OCI-LY7 (cell line): ENCODE measurements at regions of chr2 and their contacts with region 1.

Region 1: DNA sequence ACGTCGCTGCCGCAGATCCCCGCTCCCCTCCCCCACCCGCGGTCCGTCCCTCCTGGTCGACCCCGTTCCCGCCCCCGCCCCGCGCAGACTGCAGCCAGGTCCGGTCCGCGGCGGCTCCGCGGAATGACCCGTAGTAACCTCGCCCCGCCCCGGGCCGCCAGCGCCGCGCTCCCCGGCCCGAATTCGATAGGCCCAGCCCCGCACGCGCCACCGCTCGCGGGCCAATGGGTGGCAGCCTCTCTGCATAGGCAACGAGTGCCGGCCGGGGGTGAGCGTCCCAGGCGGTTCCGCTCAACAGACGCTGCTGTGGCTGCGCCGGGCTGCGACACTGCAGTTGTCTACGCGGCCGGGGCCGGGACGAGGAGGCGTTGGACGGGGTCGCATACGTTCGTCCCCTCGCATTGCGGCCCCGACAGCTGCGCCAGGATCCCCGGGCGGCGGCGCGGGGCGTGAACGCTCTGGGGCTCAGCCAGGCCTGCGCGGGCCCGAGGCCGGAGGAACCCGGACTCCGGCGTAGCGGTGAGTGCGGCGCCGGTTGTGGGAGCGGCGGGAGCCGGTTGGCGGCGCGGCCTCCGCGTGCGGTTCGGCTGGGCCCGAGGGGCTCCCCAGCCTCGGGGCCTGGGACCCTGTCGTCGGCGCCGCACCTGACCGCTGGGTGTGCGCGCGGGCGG is at the start of gene ACSL3:
- DNase-seq: peak; percentile 97
- H3K4me3 ChIP-seq: peak within 1 kb of the TSS; percentile 92
- H3K27ac ChIP-seq: peak within 1 kb of the TSS; percentile 77
- H3K4me1 ChIP-seq: peaks cover 34% of the 10 kb centered on the region
- CTCF ChIP-seq: 0 out of 2 replicates have a peak, but pooled peaks have one; percentile 32
- total RNA-seq, gene ACSL3: 62.6 and 65.6 TPM in 2 replicates

Region 2: DNA sequence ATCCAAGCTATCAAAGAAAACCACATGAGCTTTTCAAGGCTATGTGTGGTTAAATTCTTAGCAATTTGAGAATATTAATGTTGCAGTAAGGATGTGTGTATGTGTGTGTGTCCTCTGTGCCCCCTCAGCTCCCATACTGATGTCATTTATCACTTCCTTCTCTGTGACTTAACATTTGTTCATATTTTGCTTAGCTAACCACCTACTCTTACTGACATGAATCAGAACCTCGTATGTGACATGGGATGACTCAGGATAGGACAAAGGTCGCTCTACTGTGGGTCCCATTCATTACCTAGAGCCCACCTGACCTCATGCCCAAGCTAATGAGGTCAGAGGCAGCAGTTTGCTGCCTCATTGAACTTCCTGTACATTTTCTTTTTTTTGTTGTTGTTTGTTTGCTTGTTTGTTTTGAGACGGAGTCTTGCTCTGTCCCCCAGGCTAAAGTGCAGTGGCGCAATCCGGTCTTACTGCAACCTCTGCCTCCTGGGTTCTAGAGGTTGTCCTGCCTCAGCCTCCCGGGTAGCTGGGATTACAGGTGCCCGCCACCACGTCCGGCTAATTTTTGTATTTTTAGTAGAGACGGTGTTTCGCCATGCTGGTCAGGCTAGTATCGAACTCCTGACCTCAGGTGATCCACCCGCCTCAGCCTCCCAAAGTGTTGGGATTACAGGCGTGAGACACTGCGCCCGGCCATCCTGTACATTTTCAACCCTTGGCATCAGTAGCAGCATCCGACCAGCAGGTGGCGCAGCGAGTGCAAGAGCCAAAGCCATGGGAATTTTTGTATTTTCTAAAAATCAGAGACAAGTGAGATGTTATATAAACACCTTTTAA is 153.0 kb before region 1 on chr2:
- CTCF ChIA-PET with region 1: interaction called, 3 read pairs
- POLR2A ChIA-PET with region 1: interaction called, 7 read pairs
- intact Hi-C with region 1: loop called (anchors 1 kb)
- DNase-seq: peak; percentile 76
- H3K4me3 ChIP-seq: no peak overlapping the region
- H3K27ac ChIP-seq: no peak overlapping the region
- H3K4me1 ChIP-seq: peaks cover 17% of the 10 kb centered on the region
- CTCF ChIP-seq: peak; percentile 96

Region 3: DNA sequence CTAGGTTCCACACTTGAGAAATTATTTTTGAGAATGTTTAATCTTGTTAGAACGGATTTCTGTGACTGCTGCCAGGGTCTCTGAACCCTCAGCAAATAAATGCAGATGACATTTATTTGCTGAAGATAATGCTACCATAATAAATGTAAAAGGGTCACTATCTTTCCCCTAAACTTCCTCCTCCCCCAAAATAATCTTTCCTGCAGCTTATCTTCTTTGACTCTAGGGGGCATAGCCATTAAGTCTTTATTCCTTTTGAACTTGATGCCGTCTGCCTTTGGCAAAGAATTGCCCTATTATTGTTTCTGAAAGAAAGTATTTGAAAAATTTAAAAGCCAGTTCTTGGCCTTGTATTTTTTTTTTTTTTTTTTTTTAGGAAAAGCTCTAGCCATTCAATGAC is 63.6 kb before region 1 on chr2:
- CTCF ChIA-PET with region 1: interaction called, 3 read pairs
- POLR2A ChIA-PET with region 1: interaction called, 10 read pairs
- intact Hi-C with region 1: loop called (anchors 2 kb)
- DNase-seq: peak; percentile 39
- H3K4me3 ChIP-seq: no peak overlapping the region
- H3K27ac ChIP-seq: no peak overlapping the region
- H3K4me1 ChIP-seq: peaks cover 51% of the 10 kb centered on the region
- CTCF ChIP-seq: peak; percentile 80

Region 4: GRCh38 chr2:222848862-222849261 is 12.0 kb before region 1 on chr2:
- CTCF ChIA-PET with region 1: no interaction called
- POLR2A ChIA-PET with region 1: interaction called, 11 read pairs
- intact Hi-C with region 1: no loop called
- DNase-seq: no peak
- H3K4me3 ChIP-seq: no peak overlapping the region
- H3K27ac ChIP-seq: no peak overlapping the region
- H3K4me1 ChIP-seq: no peaks in the 10 kb centered on the region
- CTCF ChIP-seq: no peak

Region 5: DNA sequence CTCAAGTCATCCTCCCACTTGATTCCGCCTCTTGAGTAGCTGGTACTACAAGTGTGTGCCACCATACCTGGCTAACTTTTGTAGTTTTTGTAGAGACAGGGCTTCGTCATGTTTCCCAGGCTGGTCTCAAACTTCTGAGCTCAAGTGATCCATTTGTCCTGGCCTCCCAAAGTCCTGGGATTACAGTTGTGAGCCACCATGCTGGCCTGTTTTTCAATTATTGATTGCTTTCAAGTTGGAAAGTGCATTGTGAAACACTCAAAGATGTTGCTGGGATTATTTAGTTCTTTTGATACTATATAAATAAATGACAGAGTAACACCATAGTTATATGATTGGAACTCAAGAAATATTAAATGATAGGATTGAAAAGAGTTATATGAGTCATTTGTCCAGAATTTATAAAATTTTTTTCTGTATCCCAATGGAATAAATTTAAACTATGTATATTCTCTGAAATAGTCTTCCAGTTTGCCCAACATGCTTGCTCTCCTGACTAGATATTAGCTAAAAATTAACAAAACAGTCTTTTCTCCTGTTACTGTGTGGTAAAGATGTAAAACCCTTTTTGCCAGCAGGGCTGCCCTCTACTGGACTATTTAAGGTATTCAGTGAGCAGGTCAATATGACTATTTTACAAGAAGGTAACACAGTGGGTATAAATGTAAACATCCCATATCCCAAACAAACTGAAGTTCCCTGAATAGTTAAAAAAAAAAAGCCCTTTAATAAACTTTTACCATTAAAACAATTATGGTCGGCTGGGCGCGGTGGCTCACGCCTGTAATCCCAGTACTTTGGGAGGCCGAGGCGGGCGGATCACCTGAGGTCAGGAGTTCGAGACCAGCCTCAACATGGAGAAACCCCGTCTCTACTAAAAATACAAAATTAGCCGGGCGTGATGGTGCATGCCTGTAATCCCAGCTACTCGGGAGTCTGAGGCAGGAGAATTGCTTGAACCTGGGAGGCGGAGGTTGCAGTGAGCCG is 42.7 kb after region 1 on chr2:
- CTCF ChIA-PET with region 1: no interaction called
- POLR2A ChIA-PET with region 1: interaction called, 6 read pairs
- intact Hi-C with region 1: loop called (anchors 2 kb)
- DNase-seq: peak; percentile 67
- H3K4me3 ChIP-seq: no peak overlapping the region
- H3K27ac ChIP-seq: no peak overlapping the region
- H3K4me1 ChIP-seq: peaks cover 6% of the 10 kb centered on the region
- CTCF ChIP-seq: peak; percentile 90

Region 6: DNA sequence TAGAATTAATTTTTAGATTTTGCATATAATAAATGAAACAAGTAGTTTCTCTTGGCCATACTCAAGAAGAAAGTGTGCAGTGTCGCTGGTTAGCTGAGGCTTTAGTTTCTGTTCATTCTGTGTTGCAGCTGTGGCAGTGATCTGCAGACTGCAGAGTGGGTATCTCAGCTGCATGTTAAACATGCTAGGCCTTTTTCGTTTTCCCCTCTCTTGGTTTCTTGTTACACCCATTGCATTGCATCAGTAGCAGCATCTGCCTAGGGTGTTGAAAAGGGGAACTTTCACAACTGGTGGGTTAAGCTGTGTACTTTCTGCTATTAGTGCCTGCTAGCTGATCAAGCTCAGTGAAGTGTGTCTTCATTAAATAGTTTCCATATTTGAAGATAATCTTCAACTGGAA is 51.2 kb after region 1 on chr2:
- CTCF ChIA-PET with region 1: interaction called, 3 read pairs
- POLR2A ChIA-PET with region 1: interaction called, 16 read pairs
- intact Hi-C with region 1: loop called (anchors 2 kb)
- DNase-seq: peak; percentile 97
- H3K4me3 ChIP-seq: peak overlapping the region; percentile 59
- H3K27ac ChIP-seq: peak overlapping the region; percentile 98
- H3K4me1 ChIP-seq: peaks cover 69% of the 10 kb centered on the region
- CTCF ChIP-seq: no peak

Region 7: GRCh38 chr2:222939208-222939856 is 78.5 kb after region 1 on chr2:
- CTCF ChIA-PET with region 1: no interaction called
- POLR2A ChIA-PET with region 1: interaction called, 4 read pairs
- intact Hi-C with region 1: loop called (anchors 1 kb)
- DNase-seq: peak; percentile 73
- H3K4me3 ChIP-seq: no peak overlapping the region
- H3K27ac ChIP-seq: no peak overlapping the region
- H3K4me1 ChIP-seq: no peaks in the 10 kb centered on the region
- CTCF ChIP-seq: peak; percentile 96

Region 8: DNA sequence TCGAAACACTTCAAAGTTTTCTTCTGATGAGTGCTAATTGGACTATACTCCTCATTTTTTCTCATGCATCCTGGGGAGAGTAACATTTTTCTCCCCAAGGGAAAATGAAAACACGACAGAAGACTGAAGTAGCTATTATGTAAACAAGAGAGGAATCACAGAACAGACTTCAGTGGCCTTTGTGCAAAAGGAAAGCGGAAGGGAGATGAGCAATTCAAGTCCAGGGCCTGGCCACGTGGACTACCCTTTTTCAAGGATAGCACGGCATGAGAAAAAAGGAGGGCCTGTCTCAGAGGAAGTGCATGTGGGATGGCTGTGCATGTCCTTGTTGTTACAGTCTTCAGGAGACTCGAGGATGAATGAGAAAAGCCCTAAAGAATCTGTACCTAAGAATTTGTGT is 147.3 kb after region 1 on chr2:
- CTCF ChIA-PET with region 1: no interaction called
- POLR2A ChIA-PET with region 1: no interaction called
- intact Hi-C with region 1: no loop called
- DNase-seq: no peak
- H3K4me3 ChIP-seq: no peak overlapping the region
- H3K27ac ChIP-seq: no peak overlapping the region
- H3K4me1 ChIP-seq: no peaks in the 10 kb centered on the region
- CTCF ChIP-seq: no peak